ENCODE measurements at regions of chr1 and their contacts with region 1.

Region 1: DNA sequence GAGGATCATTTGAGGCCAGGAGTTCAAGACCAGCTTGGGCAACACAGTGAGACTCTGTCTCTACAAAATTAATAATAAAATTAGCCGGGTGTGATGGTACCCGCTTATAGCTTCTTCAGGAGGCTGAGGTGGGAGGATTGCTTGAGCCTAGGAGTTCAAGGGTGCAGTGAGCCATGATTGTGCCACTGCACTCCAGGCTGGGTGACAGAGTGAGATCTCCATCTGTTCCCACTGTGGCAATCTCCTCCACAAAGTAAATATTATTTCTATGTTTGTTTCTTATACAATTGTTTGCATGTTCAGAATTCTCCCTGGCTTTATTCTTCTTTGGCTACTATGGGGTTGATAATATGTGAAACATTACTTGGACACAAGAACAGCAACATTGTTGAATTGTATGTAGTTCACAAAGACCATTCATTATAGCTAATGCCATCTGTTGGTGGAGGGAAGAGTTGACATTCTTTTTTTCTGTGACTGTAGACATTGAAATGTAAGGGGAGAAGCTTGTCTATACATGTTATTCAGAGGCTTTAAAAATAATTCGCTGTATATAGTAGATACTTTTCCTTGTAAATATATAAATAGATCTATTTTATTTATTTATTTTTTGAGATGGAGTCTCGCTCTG is 47.8 kb upstream of the SRSF10 start:
- DNase-seq: peak; percentile 20
- ATAC-seq: peak; percentile 85
- H3K4me3 ChIP-seq: no peak overlapping the region
- H3K27ac ChIP-seq: no peak overlapping the region
- H3K4me1 ChIP-seq: no peaks in the 10 kb centered on the region
- H3K27me3 ChIP-seq: no peaks in the 10 kb centered on the region
- CTCF ChIP-seq: peak; percentile 54 to 60 (median 56); a peak in 5 of 6 replicates
- EP300 ChIP-seq: no peak
- POLR2A ChIP-seq: no peak
- RAD21 ChIP-seq: peak; percentile 78

Region 2: GRCh38 chr1:23772049-23772853 is 255.7 kb before region 1 on chr1:
- CTCF ChIA-PET with region 1: interaction called, 18 read pairs
- POLR2A ChIA-PET with region 1: no interaction called
- RAD21 ChIA-PET with region 1: interaction called, 4 read pairs
- SMC1A ChIA-PET with region 1: interaction called, 3 read pairs
- in situ Hi-C with region 1: no loop called
- intact Hi-C with region 1: loop called (anchors 10 kb)
- DNase-seq: peak; percentile 27
- ATAC-seq: peak; percentile 99
- H3K4me3 ChIP-seq: no peak overlapping the region
- H3K27ac ChIP-seq: no peak overlapping the region
- H3K4me1 ChIP-seq: peaks cover 12% of the 10 kb centered on the region
- H3K27me3 ChIP-seq: no peaks in the 10 kb centered on the region
- CTCF ChIP-seq: peak; percentile 97 to 98 (median 98); a peak in 5 of 6 replicates
- EP300 ChIP-seq: no peak
- POLR2A ChIP-seq: no peak
- RAD21 ChIP-seq: peak; percentile 91

Region 3: DNA sequence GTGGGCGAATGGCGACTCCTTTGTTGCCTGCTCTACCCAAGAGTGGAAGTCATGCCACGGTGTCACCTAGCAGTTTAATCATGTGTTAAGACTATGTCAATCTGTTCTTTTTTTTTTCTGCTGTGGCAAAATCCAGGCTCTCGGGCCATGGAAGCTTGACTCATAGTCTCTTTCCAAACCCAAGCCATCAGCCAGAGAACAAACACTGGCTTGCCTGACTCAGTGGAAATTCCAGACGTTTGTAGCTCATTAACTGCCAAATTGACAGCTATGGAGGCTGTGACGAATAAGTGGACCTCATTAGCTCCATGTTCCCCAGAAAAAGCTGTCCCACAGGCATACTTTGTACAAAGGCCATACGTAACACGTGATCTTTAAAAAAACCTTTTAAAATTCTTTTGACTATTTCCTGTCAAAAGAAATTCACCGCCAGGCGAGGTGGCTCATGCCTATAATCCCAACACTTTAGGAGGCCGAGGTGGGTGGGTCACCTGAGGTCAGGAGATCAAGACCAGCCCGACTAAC is 76.3 kb before region 1 on chr1:
- CTCF ChIA-PET with region 1: interaction called, 17 read pairs
- POLR2A ChIA-PET with region 1: interaction called, 4 read pairs
- RAD21 ChIA-PET with region 1: interaction called, 29 read pairs
- SMC1A ChIA-PET with region 1: interaction called, 77 read pairs
- in situ Hi-C with region 1: no loop called
- intact Hi-C with region 1: loop called (anchors 5 kb)
- DNase-seq: no peak
- ATAC-seq: no peak
- H3K4me3 ChIP-seq: no peak overlapping the region
- H3K27ac ChIP-seq: no peak overlapping the region
- H3K4me1 ChIP-seq: peaks cover 13% of the 10 kb centered on the region
- H3K27me3 ChIP-seq: no peaks in the 10 kb centered on the region
- CTCF ChIP-seq: no peak
- EP300 ChIP-seq: no peak
- POLR2A ChIP-seq: no peak
- RAD21 ChIP-seq: no peak

Region 4: GRCh38 chr1:23964790-23965740 is 62.9 kb before region 1 on chr1:
- CTCF ChIA-PET with region 1: interaction called, 21 read pairs
- POLR2A ChIA-PET with region 1: interaction called, 12 read pairs
- RAD21 ChIA-PET with region 1: interaction called, 18 read pairs
- SMC1A ChIA-PET with region 1: interaction called, 77 read pairs
- in situ Hi-C with region 1: no loop called
- intact Hi-C with region 1: no loop called
- DNase-seq: no peak
- ATAC-seq: peak; percentile 7
- H3K4me3 ChIP-seq: peak overlapping the region; percentile 54
- H3K27ac ChIP-seq: peak overlapping the region; percentile 74
- H3K4me1 ChIP-seq: peaks cover 16% of the 10 kb centered on the region
- H3K27me3 ChIP-seq: no peaks in the 10 kb centered on the region
- CTCF ChIP-seq: no peak
- EP300 ChIP-seq: no peak
- POLR2A ChIP-seq: no peak
- RAD21 ChIP-seq: no peak

Region 5: DNA sequence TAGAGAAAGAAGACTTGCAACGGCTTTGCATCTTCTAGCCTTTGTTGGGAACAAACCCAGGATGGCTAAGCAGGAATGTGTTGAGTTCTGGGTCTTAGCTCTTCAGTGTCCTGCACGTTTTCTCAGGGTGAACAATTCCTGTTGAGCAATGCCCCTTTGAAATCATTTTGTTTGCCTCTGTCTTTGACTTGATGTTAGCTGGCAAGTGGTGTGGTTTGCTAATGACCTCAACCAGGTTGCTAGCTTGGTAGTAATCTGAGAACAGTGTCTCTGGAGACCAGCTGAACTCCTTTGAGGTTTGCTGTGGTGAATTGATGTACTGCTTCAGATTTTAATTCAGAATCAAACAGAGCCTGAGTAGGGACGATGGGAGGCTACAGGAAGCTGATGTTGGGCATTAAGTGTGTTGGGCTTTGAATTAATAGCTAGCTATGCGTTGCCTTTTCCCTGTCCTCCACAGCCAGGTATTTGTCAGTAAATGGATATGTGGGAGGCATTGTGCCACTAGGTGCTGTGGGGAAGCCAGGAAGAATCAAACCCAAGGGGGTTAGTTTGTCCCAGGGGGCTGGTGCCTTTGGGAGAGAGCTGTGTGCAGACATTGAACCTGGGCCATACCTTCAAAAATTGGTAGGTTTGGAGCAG is 24.5 kb before region 1 on chr1:
- CTCF ChIA-PET with region 1: interaction called, 51 read pairs
- POLR2A ChIA-PET with region 1: interaction called, 3 read pairs
- RAD21 ChIA-PET with region 1: interaction called, 10 read pairs
- SMC1A ChIA-PET with region 1: interaction called, 27 read pairs
- in situ Hi-C with region 1: no loop called
- intact Hi-C with region 1: no loop called
- DNase-seq: peak; percentile 81
- ATAC-seq: peak; percentile 91
- H3K4me3 ChIP-seq: no peak overlapping the region
- H3K27ac ChIP-seq: no peak overlapping the region
- H3K4me1 ChIP-seq: peaks cover 7% of the 10 kb centered on the region
- H3K27me3 ChIP-seq: no peaks in the 10 kb centered on the region
- CTCF ChIP-seq: no peak
- EP300 ChIP-seq: no peak
- POLR2A ChIP-seq: no peak
- RAD21 ChIP-seq: no peak

Region 6: GRCh38 chr1:24567792-24568388 is 539.9 kb after region 1 on chr1:
- CTCF ChIA-PET with region 1: no interaction called
- POLR2A ChIA-PET with region 1: no interaction called
- RAD21 ChIA-PET with region 1: no interaction called
- SMC1A ChIA-PET with region 1: no interaction called
- in situ Hi-C with region 1: no loop called
- intact Hi-C with region 1: no loop called
- DNase-seq: no peak
- ATAC-seq: no peak; the same call in 2 of the 3 replicates
- H3K4me3 ChIP-seq: no peak overlapping the region
- H3K27ac ChIP-seq: no peak overlapping the region
- H3K4me1 ChIP-seq: peaks cover 4% of the 10 kb centered on the region; the same call in 1 of the 2 replicates
- H3K27me3 ChIP-seq: peaks cover 1 to 2% of the 10 kb centered on the region in 2 experiments; a peak in 2 of 4 replicates
- CTCF ChIP-seq: no peak
- EP300 ChIP-seq: no peak
- POLR2A ChIP-seq: no peak
- RAD21 ChIP-seq: no peak